Prostate gland (tissue), 2 donors: ENCODE measurements at regions of chr4 and their contacts with region 1.

Region 1: GRCh38 chr4:155787113-155787710 is 28.4 kb downstream of the GUCY1B1 start:
- DNase-seq: peak; percentile 28
- H3K4me3 ChIP-seq: no peak overlapping the region
- H3K27ac ChIP-seq: no peak overlapping the region
- H3K4me1 ChIP-seq: no peaks in the 10 kb centered on the region
- H3K27me3 ChIP-seq: no peaks in the 10 kb centered on the region
- CTCF ChIP-seq: peak; percentile 32 to 86 (median 60)
- POLR2A ChIP-seq: no peak

Region 2: DNA sequence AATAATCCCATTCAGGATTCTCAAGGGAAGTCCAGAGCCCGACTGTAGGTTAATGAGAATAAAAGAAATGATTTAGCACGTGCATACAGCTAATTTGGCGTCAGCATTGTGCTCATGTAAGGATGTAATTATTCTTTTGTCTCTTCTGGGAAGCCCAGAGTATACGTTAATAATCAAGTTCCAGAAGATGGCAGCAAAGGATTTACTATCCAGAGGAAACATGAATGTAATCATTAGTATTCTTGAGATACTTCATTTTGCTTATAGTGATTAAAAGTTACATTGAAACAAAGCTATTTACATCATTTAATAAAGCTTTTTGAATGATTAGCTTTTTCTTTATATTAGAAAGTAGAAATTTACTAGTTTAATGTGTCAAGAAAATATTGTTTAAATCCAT is 383.3 kb before region 1 on chr4:
- intact Hi-C with region 1: loop called (anchors 10 kb)
- DNase-seq: no peak
- H3K4me3 ChIP-seq: no peak overlapping the region
- H3K27ac ChIP-seq: no peak overlapping the region
- H3K4me1 ChIP-seq: peaks cover 4% of the 10 kb centered on the region
- H3K27me3 ChIP-seq: no peaks in the 10 kb centered on the region
- CTCF ChIP-seq: peak in 3 of 4 experiments; percentile 27 to 74 (median 52)
- POLR2A ChIP-seq: no peak

Region 3: DNA sequence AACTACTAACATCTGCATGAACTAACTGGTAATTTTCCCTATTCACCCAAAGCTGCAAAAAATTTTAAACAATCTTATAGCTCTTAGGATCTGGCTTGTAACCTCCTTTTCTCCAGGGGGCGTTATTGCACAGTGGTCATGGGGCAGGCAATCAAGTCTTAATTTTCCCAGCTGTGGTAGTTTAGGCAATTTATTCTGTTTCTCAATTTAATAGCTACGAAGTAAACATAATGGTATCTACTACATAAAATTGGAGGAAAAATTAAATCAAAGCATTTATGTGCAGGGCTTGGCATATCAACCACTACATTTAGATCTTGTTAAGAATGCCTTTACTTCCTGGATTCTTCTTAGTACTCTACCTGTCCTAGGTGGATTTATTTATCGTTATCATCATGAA is 257.9 kb before region 1 on chr4:
- intact Hi-C with region 1: loop called (anchors 10 kb)
- DNase-seq: no peak
- H3K4me3 ChIP-seq: no peak overlapping the region
- H3K27ac ChIP-seq: no peak overlapping the region
- H3K4me1 ChIP-seq: no peaks in the 10 kb centered on the region
- H3K27me3 ChIP-seq: no peaks in the 10 kb centered on the region
- CTCF ChIP-seq: no peak
- POLR2A ChIP-seq: no peak